HAP-1 (cell line): ENCODE measurements at regions of chr19 and their contacts with region 1.

Region 1: GRCh38 chr19:40662921-40663694 is 27.3 kb downstream of the NUMBL start:
- DNase-seq: peak; percentile 76 to 96
- H3K4me3 ChIP-seq: peak overlapping the region; percentile 41
- H3K4me1 ChIP-seq: peaks cover 7% of the 10 kb centered on the region; the same call in 1 of the 2 replicates
- H3K27me3 ChIP-seq: no peaks in the 10 kb centered on the region

Region 2: DNA sequence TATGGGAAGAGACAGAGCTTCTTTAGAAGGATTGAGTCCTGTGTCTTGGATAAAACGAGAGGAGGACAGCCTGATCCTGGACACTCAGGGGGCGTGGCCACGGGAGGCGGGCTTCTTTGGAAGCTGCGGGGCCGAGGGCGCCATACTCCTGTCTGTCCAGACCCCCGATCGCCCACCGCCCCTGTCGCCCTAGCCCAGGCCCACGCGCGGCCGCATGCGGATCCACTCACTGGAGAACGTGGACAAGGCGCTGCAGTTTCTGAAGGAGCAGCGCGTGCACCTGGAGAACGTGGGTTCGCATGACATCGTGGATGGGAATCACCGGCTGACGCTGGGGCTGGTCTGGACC is 173.3 kb before region 1 on chr19:
- in situ Hi-C with region 1: no loop called
- DNase-seq: peak in 1 of 2 experiments; percentile 17
- H3K4me3 ChIP-seq: no peak overlapping the region
- H3K4me1 ChIP-seq: peaks cover 7% of the 10 kb centered on the region
- H3K27me3 ChIP-seq: peaks cover 2% of the 10 kb centered on the region; the same call in 1 of the 2 replicates

Region 3: GRCh38 chr19:40739128-40739839 is 76.2 kb after region 1 on chr19:
- in situ Hi-C with region 1: no loop called
- DNase-seq: no peak
- H3K4me3 ChIP-seq: no peak overlapping the region
- H3K4me1 ChIP-seq: no peaks in the 10 kb centered on the region
- H3K27me3 ChIP-seq: no peaks in the 10 kb centered on the region

Region 4: DNA sequence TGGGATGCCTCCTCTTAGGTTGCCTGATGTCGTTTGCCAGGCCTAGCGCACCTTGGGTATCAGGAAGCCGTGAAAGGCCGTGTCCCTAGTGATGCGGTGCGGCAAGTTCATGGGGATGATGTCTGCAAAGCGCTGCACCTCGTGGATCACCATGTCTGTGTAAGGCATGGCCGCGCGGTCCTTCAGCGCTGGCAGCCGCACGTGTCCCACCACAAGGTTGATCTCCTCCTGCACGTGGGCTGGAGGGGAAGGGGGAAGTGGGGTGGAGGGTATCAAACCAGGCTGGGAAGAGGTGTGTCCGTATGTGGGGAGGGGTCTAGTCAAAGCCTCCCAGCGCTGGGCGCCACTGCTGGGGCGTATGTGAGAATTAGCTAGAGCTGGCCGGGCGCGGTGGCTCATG is 159.1 kb after region 1 on chr19:
- in situ Hi-C with region 1: loop called (anchors 10 kb)
- DNase-seq: no peak
- H3K4me3 ChIP-seq: no peak overlapping the region
- H3K4me1 ChIP-seq: no peaks in the 10 kb centered on the region
- H3K27me3 ChIP-seq: no peaks in the 10 kb centered on the region

Region 5: DNA sequence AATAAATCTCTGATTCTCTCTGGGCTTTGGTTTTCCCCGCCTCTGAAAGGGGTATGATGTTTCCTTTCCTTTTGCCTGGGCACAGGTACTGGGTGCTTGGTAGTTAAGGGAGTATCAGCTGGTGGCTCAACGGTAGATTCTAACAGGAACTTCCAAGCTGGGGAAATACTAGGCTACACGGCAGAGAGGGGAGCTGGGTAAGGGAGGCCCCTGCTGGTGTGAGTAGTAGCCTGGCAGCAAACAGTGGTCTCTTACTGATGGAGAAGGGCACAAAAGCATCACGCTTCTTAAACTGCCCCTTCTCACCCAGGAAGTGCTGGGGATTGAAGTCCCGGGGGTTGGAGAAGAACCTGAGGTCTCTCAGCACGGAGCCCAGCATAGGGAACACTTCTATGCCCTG is 245.9 kb after region 1 on chr19:
- in situ Hi-C with region 1: loop called (anchors 25 kb)
- DNase-seq: peak; percentile 49 to 66
- H3K4me3 ChIP-seq: no peak overlapping the region
- H3K4me1 ChIP-seq: no peaks in the 10 kb centered on the region; the same call in 1 of the 2 replicates
- H3K27me3 ChIP-seq: no peaks in the 10 kb centered on the region

Region 6: DNA sequence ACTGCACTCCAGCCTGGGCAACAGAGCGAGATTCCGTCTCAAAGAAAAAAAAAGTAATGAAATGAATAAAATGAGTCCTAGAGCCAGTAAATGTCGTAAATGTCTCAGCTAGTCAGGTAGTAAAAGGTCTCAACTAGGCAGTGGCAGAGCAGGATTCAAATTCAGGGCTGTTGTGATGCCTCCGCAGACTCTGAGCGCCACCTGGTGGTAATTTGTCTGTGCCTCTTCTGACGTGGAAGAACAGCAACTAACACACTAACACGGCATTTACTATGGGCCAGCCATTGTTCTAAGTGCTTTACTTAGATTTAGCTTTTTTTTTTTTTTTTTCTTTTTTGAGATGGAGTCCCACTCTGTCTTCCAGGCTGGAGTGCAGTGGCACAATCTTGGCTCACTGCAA is 481.3 kb after region 1 on chr19:
- in situ Hi-C with region 1: loop called (anchors 10 kb)
- DNase-seq: peak; percentile 60 to 90
- H3K4me3 ChIP-seq: no peak overlapping the region
- H3K4me1 ChIP-seq: no peaks in the 10 kb centered on the region
- H3K27me3 ChIP-seq: peaks cover 3% of the 10 kb centered on the region; the same call in 1 of the 2 replicates